Spleen (tissue), 13 donors: ENCODE measurements at regions of chr4 and their contacts with region 1.

Region 1: DNA sequence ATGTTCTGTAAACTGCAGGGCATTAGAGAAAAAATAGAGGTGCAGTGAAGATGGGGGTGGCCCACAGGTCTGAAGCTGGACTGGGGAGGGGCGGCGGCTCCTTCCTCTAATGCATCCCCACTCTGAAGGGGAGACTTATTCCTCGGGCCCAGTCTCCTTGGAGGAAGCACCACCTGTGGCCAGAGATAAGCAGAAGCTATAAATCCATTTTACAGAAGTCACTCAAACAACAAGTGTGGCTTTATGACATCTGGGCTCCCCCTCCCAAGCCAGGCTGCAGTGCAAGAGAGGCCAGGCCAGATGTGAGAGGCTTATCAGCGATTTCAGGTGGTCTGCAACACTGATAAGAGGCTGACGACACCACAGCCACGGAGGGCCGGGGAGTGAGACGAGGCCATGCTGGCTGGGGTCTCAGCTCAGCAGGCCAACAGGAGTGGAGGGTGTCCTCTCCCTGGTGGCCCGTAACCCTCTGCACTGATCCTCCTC is 15.8 kb downstream of the CYTL1 start:
- DNase-seq: no peak
- H3K4me3 ChIP-seq: no peak overlapping the region
- H3K27ac ChIP-seq: no peak overlapping the region
- H3K4me1 ChIP-seq: no peaks in the 10 kb centered on the region
- H3K27me3 ChIP-seq: peaks cover 0 to 36% (median 3%) of the 10 kb centered on the region in 7 donors
- CTCF ChIP-seq: no peak
- POLR2A ChIP-seq: no peak

Region 2: DNA sequence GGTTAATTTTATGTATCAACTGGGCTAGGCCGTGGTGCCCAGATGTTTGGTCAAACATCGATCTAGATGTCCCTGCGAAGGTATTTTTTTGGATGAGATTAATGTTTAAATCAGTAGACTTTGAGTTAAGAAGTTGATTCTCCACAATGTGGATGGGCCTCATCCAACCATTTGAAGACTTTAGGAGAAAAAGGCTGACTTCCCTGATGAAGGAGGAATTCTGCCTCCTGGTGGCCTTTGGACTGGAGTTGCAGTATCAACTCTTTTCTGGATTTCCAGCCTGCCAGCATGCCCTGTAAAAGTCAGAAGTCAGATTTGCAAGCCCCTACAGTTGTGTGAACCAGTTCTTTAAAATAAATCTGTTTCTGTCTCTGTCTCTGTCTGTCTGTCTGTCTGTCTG is 139.3 kb after region 1 on chr4:
- intact Hi-C with region 1: loop called (anchors 10 kb)
- DNase-seq: no peak
- H3K4me3 ChIP-seq: no peak overlapping the region
- H3K27ac ChIP-seq: no peak overlapping the region
- H3K4me1 ChIP-seq: no peaks in the 10 kb centered on the region
- H3K27me3 ChIP-seq: no peaks in the 10 kb centered on the region
- CTCF ChIP-seq: peak in 8 of 11 experiments; percentile 12 to 67 (median 48)
- POLR2A ChIP-seq: no peak